ENCODE measurements at regions of chr6 and their contacts with region 1.

Region 1: GRCh38 chr6:105981002-105981887 is 104.9 kb upstream of the PRDM1 start:
- DNase-seq: peak; percentile 17 to 22
- H3K4me3 ChIP-seq: peak overlapping the region in 2 of 3 donors; percentile 5 to 29
- H3K27ac ChIP-seq: no peak overlapping the region
- H3K4me1 ChIP-seq: peaks cover 11 to 19% of the 10 kb centered on the region in 2 donors
- H3K27me3 ChIP-seq: no peaks in the 10 kb centered on the region
- CTCF ChIP-seq: no peak
- POLR2A ChIP-seq: no peak

Region 2: DNA sequence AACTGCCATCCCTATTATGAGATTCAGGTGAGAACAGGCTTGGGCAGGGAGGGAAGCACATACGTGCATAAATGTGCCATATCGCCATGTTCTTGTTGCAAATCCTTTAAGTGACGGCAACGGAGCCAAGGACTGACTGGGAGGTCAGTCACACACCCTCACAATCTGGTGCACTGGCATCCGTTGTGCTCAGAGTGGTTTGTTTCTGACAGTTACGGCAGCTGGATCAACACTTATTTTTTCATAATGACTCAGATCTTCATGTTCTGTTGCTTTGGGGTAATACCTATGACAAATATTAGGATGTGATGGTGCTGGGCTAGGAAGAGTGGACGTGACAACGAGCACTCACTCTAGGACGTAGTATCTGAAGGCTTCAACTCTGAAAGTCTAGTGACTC is 522.2 kb before region 1 on chr6:
- intact Hi-C with region 1: no loop called
- DNase-seq: no peak
- H3K4me3 ChIP-seq: no peak overlapping the region
- H3K27ac ChIP-seq: no peak overlapping the region
- H3K4me1 ChIP-seq: no peaks in the 10 kb centered on the region
- H3K27me3 ChIP-seq: no peaks in the 10 kb centered on the region
- CTCF ChIP-seq: no peak
- POLR2A ChIP-seq: no peak

Region 3: DNA sequence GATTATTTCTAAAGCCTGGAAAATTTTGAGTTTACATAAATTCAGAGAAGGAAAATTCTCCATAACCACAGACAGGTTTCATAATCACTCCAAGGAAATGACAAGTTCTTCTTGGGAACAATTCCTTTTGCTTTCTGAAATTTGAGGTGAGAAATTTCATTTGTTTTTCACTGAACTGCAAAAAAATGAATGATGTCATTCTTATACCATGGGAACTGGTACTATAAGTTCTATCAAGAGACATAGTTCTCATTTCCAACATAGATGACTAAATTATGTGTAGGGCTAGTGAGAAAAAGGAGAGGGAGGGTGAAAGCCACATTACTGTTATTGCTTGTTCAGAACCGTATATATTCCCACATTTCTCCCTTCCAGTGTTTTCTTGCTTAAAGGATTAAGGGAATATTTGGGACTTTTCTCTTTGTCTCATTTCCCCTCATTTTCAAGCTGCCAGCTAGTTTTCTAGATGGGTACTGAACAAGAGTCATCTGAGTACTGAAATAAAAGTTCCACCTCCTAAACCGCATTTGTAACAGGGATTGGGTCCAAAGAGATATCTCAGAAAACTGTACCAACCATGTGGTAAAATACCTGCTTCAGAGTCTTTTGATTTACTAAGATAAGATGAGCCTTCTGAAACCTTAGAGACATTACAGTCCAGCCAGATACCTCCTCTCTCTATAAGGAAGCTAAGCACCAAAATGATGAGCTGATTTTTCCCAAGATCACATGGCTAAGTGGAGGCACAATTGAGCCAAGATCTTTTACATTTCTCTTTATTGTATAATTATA is 39.4 kb before region 1 on chr6:
- intact Hi-C with region 1: no loop called
- DNase-seq: no peak
- H3K4me3 ChIP-seq: no peak overlapping the region
- H3K27ac ChIP-seq: no peak overlapping the region
- H3K4me1 ChIP-seq: no peaks in the 10 kb centered on the region
- H3K27me3 ChIP-seq: no peaks in the 10 kb centered on the region
- CTCF ChIP-seq: no peak
- POLR2A ChIP-seq: no peak

Region 4: GRCh38 chr6:106072501-106073090 is 91.4 kb after region 1 on chr6:
- intact Hi-C with region 1: loop called (anchors 10 kb)
- DNase-seq: no peak
- H3K4me3 ChIP-seq: no peak overlapping the region
- H3K27ac ChIP-seq: no peak overlapping the region
- H3K4me1 ChIP-seq: peaks cover 5 to 10% of the 10 kb centered on the region in 2 donors
- H3K27me3 ChIP-seq: no peaks in the 10 kb centered on the region
- CTCF ChIP-seq: no peak
- POLR2A ChIP-seq: no peak

Region 5: DNA sequence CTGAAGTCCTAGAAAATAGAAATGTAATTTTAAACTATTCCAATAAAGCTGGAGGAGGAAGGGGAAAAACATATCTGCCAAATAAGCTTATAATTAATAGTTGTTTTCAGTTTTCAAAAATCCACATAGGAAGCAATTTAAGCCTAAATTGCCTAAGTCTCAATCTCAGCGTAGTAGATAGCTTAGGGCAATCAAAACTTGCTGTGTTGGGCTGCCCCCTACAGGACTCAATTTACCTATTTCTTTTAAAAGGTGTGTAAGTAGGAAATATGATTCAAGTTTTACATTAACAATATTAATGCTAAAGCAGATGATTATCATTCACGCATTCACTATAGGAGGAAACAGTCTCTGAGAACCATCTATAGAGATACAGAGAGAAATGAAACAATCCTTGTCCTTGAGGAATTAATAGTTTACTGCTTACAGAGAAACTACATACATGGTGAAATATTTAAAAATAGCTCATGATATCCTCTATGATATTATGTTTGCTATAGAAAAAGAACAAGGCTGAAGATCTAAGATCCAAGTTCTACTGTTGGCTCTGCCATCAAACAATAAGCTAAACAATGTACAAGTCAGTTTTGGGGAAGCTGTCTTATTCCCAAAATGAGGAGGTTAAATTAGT is 242.2 kb after region 1 on chr6:
- intact Hi-C with region 1: loop called (anchors 10 kb)
- DNase-seq: peak; percentile 41 to 67
- H3K4me3 ChIP-seq: no peak overlapping the region
- H3K27ac ChIP-seq: no peak overlapping the region
- H3K4me1 ChIP-seq: no peaks in the 10 kb centered on the region
- H3K27me3 ChIP-seq: no peaks in the 10 kb centered on the region
- CTCF ChIP-seq: peak in 5 of 6 experiments; percentile 51 to 79 (median 66)
- POLR2A ChIP-seq: no peak

Measured in thyroid gland (tissue), 4 donors.